K562 (cell line): ENCODE measurements at regions of chr17 and their contacts with region 1.

Region 1: DNA sequence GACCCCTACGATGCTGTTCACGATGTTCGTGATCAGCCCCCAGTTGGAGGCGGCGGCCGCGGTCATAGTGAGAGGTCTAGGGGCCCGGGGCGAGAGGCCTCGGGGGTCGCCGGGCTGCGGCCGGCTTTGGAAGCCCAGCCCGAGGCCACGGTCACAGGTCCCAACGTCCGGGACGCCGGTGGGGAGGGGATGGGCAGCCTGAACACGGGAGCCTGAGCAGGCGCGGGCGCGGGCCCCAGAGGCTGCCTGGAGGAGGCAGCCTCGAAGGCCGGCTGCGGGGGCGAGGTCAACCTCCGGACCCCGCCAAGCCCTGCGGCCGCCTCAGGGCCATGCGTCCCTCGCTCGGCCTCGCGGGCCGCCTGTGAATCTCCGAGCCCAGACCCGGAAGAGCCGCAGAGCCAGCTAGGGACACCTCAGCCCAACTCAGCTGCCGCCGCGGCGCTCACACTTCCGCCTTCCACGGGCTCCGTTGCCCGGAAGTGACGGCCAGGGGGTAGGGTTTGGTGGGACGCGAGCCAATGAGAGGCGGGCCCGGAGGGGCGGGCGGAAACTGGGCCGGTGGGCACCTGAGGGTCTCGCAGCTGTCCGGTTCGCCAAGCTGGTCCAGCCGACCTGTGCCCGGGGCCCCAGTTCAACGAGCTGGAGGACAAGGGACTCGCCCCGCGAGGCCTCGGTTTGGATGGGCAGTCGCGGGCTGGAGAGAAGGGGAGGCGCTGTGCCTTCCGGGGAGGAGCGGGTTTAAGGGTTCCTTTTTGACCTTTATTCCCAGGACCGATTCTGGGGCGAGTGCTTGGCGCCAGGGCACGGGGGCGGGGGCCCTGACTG is at the start of gene SLC38A10:
- DNase-seq: peak; percentile 95 to 98 (median 96)
- ATAC-seq: peak; percentile 93
- H3K4me3 ChIP-seq: peak within 1 kb of the TSS; percentile 86
- H3K27ac ChIP-seq: peak within 1 kb of the TSS; percentile 90
- H3K4me1 ChIP-seq: peaks cover 18 to 40% of the 10 kb centered on the region in 2 experiments; a peak in 4 of 5 replicates
- H3K27me3 ChIP-seq: no peaks in the 10 kb centered on the region
- CTCF ChIP-seq: 0 out of 6 replicates have a peak, but pooled peaks of 1 of the 3 experiments have one; percentile 6
- EP300 ChIP-seq: 0 out of 2 replicates have a peak, but pooled peaks have one; percentile 14
- POLR2A ChIP-seq: peak; percentile 94
- RAD21 ChIP-seq: no peak
- polyA plus RNA-seq, gene SLC38A10: 0.45 to 0.92 TPM

Region 2: DNA sequence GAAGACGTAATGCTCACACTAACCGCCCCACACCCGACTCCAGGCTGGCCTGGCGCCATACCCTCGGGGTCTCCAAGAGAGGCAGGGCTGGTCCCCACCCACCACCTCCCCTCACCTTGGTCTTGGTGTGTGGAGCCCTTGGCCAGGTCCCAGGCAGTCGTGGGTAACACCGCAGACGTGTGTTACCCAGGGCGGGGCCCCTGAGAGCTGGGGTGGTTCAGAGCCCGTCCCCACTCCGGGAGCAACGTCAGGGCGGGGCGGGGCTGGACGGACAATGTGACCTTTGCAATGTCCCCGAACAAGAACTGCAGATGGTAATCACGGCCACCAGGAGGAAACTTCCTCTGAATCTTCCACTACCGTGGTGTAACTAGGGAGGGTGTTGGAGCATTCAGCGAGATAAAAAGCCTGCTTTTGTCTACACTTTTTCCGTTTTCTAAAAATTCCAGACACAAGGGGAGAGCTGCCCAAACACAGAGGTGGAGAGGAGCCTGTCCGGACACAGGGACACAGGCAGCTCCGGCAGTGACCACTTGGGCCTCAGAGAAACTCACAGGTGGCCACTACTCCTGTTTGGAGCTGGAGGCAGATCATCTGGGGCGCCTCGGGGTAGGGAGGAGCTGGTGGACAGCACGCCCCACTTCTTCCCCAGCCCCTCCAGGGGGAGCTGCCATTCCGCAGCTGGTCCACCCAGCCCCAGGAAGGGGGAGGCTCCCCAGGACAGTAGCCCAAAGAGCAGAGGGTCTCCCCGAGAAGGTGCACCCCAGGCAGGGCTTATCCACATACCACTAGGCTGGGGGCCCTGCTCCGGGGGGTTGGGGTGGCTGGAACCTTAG is 14.2 kb after region 1 on chr17:
- CTCF ChIA-PET with region 1: interaction called, 3 read pairs
- POLR2A ChIA-PET with region 1: interaction called, 14 read pairs
- in situ Hi-C with region 1: no loop called
- intact Hi-C with region 1: no loop called
- DNase-seq: peak; percentile 93 to 96 (median 94)
- ATAC-seq: peak; percentile 94
- H3K4me3 ChIP-seq: peak overlapping the region; percentile 42
- H3K27ac ChIP-seq: peak overlapping the region; percentile 84
- H3K4me1 ChIP-seq: peaks cover 22 to 91% of the 10 kb centered on the region in 2 experiments
- H3K27me3 ChIP-seq: no peaks in the 10 kb centered on the region
- CTCF ChIP-seq: peak; percentile 54 to 60 (median 60); a peak in 5 of 6 replicates
- EP300 ChIP-seq: no peak
- POLR2A ChIP-seq: peak; percentile 68
- RAD21 ChIP-seq: peak; percentile 36 to 64

Region 3: GRCh38 chr17:81394921-81395599 is 100.0 kb after region 1 on chr17 and contains the start of gene BAHCC1:
- CTCF ChIA-PET with region 1: interaction called, 4 read pairs
- POLR2A ChIA-PET with region 1: interaction called, 6 read pairs
- in situ Hi-C with region 1: no loop called
- intact Hi-C with region 1: loop called (anchors 2 kb)
- DNase-seq: peak; percentile 89 to 99 (median 92)
- ATAC-seq: peak; percentile 78
- H3K4me3 ChIP-seq: peak within 1 kb of the TSS; percentile 20
- H3K27ac ChIP-seq: peak within 1 kb of the TSS; percentile 57
- H3K4me1 ChIP-seq: peaks cover 17 to 88% of the 10 kb centered on the region in 2 experiments
- H3K27me3 ChIP-seq: no peaks in the 10 kb centered on the region
- CTCF ChIP-seq: no peak
- EP300 ChIP-seq: no peak
- POLR2A ChIP-seq: peak; percentile 55; the same call in 1 of the 2 replicates
- RAD21 ChIP-seq: no peak
- polyA plus RNA-seq, gene BAHCC1: 0.14 to 0.24 TPM